Aorta (tissue), 5 donors: ENCODE measurements at regions of chr7 and their contacts with region 1.

Region 1: DNA sequence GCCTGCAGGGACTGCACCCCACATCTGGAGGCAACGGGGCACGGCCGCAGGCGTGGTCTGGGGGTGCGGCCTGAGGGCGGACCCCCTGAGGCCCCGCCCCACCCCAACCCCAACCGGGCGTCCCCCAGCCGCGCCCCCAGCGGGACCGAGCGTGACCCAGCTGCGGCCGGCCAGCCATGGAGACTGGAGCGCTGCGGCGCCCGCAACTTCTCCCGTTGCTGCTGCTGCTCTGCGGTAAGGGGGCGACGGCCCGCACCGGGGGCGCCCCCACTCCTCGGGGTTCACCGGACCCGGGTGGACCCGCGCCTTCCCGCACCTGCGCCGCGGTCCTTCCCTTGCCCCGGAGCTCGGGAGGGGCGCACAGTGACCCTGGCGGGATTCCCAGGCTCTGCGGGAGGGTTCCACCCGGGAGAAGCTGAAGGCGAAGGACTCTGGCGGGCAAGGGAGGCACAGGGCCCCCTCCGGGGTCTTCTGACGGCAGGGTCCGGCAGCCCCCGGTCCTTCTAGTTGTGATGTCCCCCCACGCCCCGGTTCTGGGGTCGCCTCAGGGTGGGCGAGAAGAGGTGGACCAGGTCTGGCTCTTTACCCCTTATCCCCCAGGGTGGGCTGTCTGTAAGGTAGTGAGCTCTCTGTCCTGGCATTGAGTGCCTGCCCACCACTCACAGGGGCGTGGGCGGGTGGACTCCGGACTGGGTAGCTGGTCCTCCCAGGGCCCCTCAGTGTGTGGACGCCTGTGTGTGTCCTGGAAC is at the start of gene RAMP3:
- DNase-seq: peak; percentile 42 to 75
- ATAC-seq: no peak
- H3K4me3 ChIP-seq: no peak within 1 kb of the TSS
- H3K27ac ChIP-seq: no peak within 1 kb of the TSS
- H3K4me1 ChIP-seq: no peaks in the 10 kb centered on the region
- H3K27me3 ChIP-seq: no peaks in the 10 kb centered on the region
- total RNA-seq, gene RAMP3: 43.0 to 78.0 TPM

Region 2: GRCh38 chr7:45217358-45217757 is 59.5 kb after region 1 on chr7:
- intact Hi-C with region 1: no loop called
- DNase-seq: no peak
- ATAC-seq: no peak
- H3K4me3 ChIP-seq: no peak overlapping the region
- H3K27ac ChIP-seq: no peak overlapping the region
- H3K4me1 ChIP-seq: no peaks in the 10 kb centered on the region
- H3K27me3 ChIP-seq: no peaks in the 10 kb centered on the region

Region 3: GRCh38 chr7:45259966-45260646 is 102.3 kb after region 1 on chr7:
- intact Hi-C with region 1: loop called (anchors 2 kb)
- DNase-seq: peak; percentile 57 to 89
- ATAC-seq: peak; percentile 87
- H3K4me3 ChIP-seq: no peak overlapping the region
- H3K27ac ChIP-seq: no peak overlapping the region
- H3K4me1 ChIP-seq: no peaks in the 10 kb centered on the region
- H3K27me3 ChIP-seq: no peaks in the 10 kb centered on the region

Region 4: DNA sequence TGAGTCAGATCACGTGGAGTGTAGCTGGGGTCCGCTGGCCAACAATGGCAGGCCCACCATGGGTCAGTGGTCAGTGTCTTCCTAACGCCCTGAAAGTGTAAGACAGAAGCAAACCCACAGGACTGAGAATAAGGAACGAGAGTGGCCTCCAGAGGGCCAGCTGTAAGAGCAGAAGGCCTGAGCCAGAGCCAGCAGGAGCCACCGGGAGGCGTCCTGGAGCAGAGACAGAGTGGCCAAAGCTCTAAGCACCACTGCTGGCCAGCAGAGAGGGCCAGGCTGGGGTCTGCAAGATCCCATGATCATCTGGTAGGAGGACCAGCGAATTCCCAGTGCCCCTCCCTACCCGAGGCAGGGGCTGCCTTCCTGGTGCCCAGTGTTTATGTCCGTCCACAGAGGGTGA is 705.9 kb after region 1 on chr7:
- intact Hi-C with region 1: loop called in 1 of 2 experiments (anchors 10 kb)
- DNase-seq: no peak
- ATAC-seq: no peak
- H3K4me3 ChIP-seq: no peak overlapping the region
- H3K27ac ChIP-seq: no peak overlapping the region
- H3K4me1 ChIP-seq: no peaks in the 10 kb centered on the region
- H3K27me3 ChIP-seq: no peaks in the 10 kb centered on the region